Activated CD4-positive, alpha-beta memory T cell treated with anti-CD3 and anti-CD28 coated beads for 36 hours (primary cell): ENCODE measurements at regions of chr1 and their contacts with region 1.

Region 1: DNA sequence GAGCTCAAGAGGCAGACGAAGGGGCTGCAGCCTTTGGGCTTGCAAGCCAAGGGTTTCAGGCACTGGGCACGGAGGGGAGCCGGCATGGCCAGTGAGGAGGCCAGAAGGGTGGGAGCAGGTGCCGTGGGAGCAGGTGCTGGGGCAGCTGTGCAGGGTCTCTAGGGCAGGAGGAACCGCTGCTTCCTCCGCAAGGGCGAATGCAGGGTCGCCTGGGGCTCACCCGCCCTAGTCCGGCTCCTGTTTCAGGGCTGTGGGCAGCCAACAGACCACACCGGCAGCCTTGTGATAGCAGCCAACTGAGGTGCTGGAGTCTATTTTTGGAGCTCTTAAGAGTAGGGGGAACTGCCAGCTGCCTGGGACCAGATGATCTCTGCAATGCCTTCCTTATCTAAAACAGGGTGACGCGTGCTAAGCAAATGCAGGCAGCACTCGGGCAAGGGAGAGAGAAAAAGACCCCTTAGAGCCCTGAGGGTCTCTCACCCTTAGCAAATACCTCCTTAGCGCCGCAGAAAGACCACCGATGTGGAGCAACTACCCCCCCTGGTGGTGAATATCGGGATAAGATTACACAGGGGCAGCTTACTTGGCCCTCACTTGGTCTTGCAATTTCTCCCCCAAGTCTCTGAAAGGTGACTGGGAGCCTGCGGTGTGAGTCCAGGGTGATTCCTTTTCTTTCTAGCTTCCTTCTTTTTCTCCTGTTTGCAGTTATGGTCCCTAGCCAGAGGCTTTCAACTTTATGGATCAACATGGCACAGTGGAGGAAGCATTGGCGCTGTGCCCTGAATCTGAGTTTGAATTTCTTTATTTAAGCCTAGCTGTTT is 20.7 kb upstream of the MAPKAPK2 start:
- DNase-seq: peak; percentile 78
- H3K4me3 Mint-ChIP-seq: no peak overlapping the region
- H3K27ac Mint-ChIP-seq: no peak overlapping the region
- H3K4me1 Mint-ChIP-seq: peaks cover 38% of the 10 kb centered on the region
- H3K27me3 Mint-ChIP-seq: peaks cover 9% of the 10 kb centered on the region

Region 2: GRCh38 chr1:205658943-205659581 is 1005.0 kb before region 1 on chr1:
- CTCF ChIA-PET with region 1: no interaction called
- POLR2A ChIA-PET with region 1: no interaction called
- intact Hi-C with region 1: no loop called
- DNase-seq: peak; percentile 85
- H3K4me3 Mint-ChIP-seq: no peak overlapping the region
- H3K27ac Mint-ChIP-seq: no peak overlapping the region
- H3K4me1 Mint-ChIP-seq: no peaks in the 10 kb centered on the region
- H3K27me3 Mint-ChIP-seq: peaks cover 2% of the 10 kb centered on the region

Region 3: DNA sequence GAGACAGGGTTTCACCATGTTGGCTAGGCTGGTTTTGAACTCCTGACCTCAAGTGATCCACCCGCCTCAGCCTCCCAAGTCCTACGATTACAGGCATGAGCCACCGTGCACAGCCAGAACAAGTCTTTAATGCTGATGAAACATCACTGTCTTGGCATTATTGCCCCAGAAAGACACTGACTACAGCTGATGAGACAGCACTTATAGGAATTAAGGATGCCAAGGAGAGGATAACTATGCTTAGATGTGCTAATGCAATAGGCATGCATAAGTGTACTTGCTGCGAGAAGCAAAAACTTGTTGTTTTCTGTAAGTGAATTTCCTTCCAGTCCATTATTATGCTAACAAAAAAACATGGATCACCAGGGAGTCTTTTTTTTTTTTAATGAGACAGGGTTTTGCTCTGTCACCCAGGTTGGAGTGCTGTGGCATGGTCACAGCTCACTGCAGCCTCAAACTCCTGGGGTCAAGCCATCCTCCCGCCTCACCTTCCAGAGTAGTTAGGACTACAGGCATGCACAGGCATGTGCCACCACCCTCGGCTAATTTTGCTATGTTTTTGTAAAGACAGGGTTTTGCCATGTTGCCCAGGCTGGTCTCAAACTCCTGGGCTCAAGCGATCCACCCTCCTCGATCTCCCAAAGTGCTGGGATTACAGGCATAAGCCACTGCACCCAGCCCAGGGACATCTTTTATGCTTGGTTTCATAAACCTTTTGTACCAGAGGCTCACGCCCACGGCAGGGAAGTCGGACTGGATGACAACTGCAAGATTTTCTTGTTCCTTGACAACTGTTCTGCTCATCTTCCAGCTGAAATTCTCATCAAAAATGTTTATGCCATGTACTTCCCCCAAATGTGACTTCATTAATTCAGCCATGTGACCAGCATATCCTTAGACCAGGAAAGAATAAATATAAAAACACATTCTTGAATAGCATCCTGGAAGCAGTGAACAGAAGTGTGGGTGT is 588.0 kb before region 1 on chr1:
- CTCF ChIA-PET with region 1: no interaction called
- POLR2A ChIA-PET with region 1: no interaction called
- intact Hi-C with region 1: no loop called
- DNase-seq: no peak
- H3K4me3 Mint-ChIP-seq: no peak overlapping the region
- H3K27ac Mint-ChIP-seq: no peak overlapping the region
- H3K4me1 Mint-ChIP-seq: peaks cover 14% of the 10 kb centered on the region
- H3K27me3 Mint-ChIP-seq: no peaks in the 10 kb centered on the region

Region 4: GRCh38 chr1:206461602-206462455 is 202.2 kb before region 1 on chr1:
- CTCF ChIA-PET with region 1: interaction called, 14 read pairs
- POLR2A ChIA-PET with region 1: no interaction called
- intact Hi-C with region 1: no loop called
- DNase-seq: peak; percentile 81
- H3K4me3 Mint-ChIP-seq: no peak overlapping the region
- H3K27ac Mint-ChIP-seq: no peak overlapping the region
- H3K4me1 Mint-ChIP-seq: peaks cover 52% of the 10 kb centered on the region
- H3K27me3 Mint-ChIP-seq: no peaks in the 10 kb centered on the region

Region 5: DNA sequence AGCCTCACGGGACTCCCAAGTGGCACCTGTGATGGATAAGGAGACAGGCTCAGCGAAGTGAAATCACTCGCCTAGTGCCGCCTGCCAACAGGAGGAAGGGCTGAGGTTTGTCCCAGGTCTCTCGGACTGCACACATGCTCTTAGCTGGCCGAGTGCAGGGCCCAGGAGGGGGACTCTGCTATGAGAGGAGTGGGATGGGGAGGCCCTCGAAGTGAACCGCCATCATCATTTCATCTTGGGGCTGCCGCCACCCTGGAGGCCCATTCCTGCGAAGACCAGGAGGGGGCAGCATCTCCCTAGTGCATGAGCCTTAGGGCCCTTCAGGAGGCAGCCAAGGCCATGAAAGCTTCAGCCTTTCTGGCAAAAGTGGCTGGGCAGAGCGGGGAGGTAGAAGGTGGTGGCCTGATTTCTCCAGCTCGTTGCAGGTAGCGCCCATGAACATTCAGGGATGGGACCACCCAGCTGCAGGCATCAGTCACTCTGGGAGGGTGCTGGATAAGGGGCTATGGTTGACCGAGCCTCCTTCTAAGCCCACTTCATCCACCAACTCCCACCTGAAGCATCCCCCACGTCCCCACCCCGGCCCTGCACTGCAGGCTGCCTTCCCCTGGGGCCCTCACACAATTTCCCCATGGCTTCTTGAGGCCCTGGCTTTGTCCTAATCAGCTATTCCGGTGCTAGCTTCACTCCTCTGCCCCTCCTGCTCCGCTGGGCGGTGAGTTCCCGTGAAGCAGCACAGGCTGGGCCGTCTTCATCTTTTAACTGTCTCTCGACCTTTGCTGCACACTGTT is 173.9 kb before region 1 on chr1:
- CTCF ChIA-PET with region 1: interaction called, 96 read pairs
- POLR2A ChIA-PET with region 1: interaction called, 3 read pairs
- intact Hi-C with region 1: loop called (anchors 1 kb)
- DNase-seq: peak; percentile 84
- H3K4me3 Mint-ChIP-seq: no peak overlapping the region
- H3K27ac Mint-ChIP-seq: no peak overlapping the region
- H3K4me1 Mint-ChIP-seq: no peaks in the 10 kb centered on the region
- H3K27me3 Mint-ChIP-seq: no peaks in the 10 kb centered on the region

Region 6: GRCh38 chr1:206563367-206564207 is 100.5 kb before region 1 on chr1:
- CTCF ChIA-PET with region 1: no interaction called
- POLR2A ChIA-PET with region 1: no interaction called
- intact Hi-C with region 1: no loop called
- DNase-seq: no peak
- H3K4me3 Mint-ChIP-seq: peak overlapping the region; percentile 72
- H3K27ac Mint-ChIP-seq: peak overlapping the region; percentile 99
- H3K4me1 Mint-ChIP-seq: peaks cover 86% of the 10 kb centered on the region
- H3K27me3 Mint-ChIP-seq: no peaks in the 10 kb centered on the region

Region 7: DNA sequence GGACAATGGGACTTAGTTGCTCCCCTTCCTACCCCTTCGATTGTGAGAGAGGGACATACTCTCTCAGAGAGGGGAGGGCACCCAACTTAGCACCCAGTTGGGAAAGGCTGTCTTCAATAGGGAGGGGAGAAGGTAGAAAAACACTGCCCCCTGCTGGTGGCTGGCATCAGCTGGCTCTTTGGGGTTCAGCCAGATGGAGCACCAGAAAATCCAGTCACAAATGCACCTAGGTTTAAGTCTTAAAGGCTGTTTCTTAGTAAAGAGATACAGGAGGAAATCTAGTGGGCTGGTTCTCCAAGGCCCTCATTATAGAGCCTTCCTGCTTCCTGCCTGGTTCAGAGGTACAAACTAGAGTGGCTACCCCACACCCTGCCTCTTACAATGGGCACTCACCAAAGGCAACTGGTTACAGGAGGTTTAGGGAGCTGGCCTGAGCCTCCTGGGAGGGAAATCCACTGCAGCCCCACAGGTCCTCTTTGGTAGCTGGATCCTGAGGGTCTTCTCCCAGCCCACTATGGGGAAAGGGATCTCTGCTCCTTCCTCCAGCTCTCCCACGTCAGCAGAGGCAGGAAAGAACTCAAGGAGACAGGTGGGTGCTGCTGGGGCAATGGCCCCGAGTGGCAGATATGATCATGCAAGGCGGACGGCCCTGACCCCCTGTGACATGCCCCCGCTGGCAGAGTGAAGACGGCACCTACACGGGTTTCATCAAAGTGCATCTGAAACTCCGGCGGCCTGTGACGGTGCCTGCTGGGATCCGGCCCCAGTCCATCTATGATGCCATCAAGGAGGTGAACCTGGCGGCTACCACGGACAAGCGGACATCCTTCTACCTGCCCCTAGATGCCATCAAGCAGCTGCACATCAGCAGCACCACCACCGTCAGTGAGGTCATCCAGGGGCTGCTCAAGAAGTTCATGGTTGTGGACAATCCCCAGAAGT is 80.1 kb before region 1 on chr1:
- CTCF ChIA-PET with region 1: interaction called, 16 read pairs
- POLR2A ChIA-PET with region 1: no interaction called
- intact Hi-C with region 1: no loop called
- DNase-seq: peak; percentile 91
- H3K4me3 Mint-ChIP-seq: peak overlapping the region; percentile 73
- H3K27ac Mint-ChIP-seq: peak overlapping the region; percentile 99
- H3K4me1 Mint-ChIP-seq: peaks cover 94% of the 10 kb centered on the region
- H3K27me3 Mint-ChIP-seq: no peaks in the 10 kb centered on the region

Region 8: GRCh38 chr1:206635080-206635977 is 28.7 kb before region 1 on chr1 and contains the start of gene DYRK3:
- CTCF ChIA-PET with region 1: interaction called, 399 read pairs
- POLR2A ChIA-PET with region 1: interaction called, 10 read pairs
- intact Hi-C with region 1: loop called (anchors 1 kb)
- DNase-seq: peak; percentile 96
- H3K4me3 Mint-ChIP-seq: peak within 1 kb of the TSS; percentile 80
- H3K27ac Mint-ChIP-seq: peak within 1 kb of the TSS; percentile 80
- H3K4me1 Mint-ChIP-seq: peaks cover 25% of the 10 kb centered on the region
- H3K27me3 Mint-ChIP-seq: peaks cover 5% of the 10 kb centered on the region
- total RNA-seq, gene DYRK3: 10.1 to 11.4 TPM

Region 9: GRCh38 chr1:206693029-206693428 is 29.0 kb after region 1 on chr1:
- CTCF ChIA-PET with region 1: interaction called, 33 read pairs
- POLR2A ChIA-PET with region 1: no interaction called
- intact Hi-C with region 1: no loop called
- DNase-seq: no peak
- H3K4me3 Mint-ChIP-seq: no peak overlapping the region
- H3K27ac Mint-ChIP-seq: peak overlapping the region; percentile 30
- H3K4me1 Mint-ChIP-seq: peaks cover 81% of the 10 kb centered on the region
- H3K27me3 Mint-ChIP-seq: no peaks in the 10 kb centered on the region

Region 10: GRCh38 chr1:206725109-206725963 is 61.3 kb after region 1 on chr1:
- CTCF ChIA-PET with region 1: interaction called, 11 read pairs
- POLR2A ChIA-PET with region 1: no interaction called
- intact Hi-C with region 1: no loop called
- DNase-seq: peak; percentile 77
- H3K4me3 Mint-ChIP-seq: no peak overlapping the region
- H3K27ac Mint-ChIP-seq: peak overlapping the region; percentile 33
- H3K4me1 Mint-ChIP-seq: peaks cover 50% of the 10 kb centered on the region
- H3K27me3 Mint-ChIP-seq: no peaks in the 10 kb centered on the region

Region 11: GRCh38 chr1:206851341-206852010 is 187.4 kb after region 1 on chr1:
- CTCF ChIA-PET with region 1: no interaction called
- POLR2A ChIA-PET with region 1: no interaction called
- intact Hi-C with region 1: no loop called
- DNase-seq: no peak
- H3K4me3 Mint-ChIP-seq: no peak overlapping the region
- H3K27ac Mint-ChIP-seq: no peak overlapping the region
- H3K4me1 Mint-ChIP-seq: peaks cover 2% of the 10 kb centered on the region
- H3K27me3 Mint-ChIP-seq: peaks cover 20% of the 10 kb centered on the region